B cell (primary cell): ENCODE measurements at regions of chr6 and their contacts with region 1.

Region 1: DNA sequence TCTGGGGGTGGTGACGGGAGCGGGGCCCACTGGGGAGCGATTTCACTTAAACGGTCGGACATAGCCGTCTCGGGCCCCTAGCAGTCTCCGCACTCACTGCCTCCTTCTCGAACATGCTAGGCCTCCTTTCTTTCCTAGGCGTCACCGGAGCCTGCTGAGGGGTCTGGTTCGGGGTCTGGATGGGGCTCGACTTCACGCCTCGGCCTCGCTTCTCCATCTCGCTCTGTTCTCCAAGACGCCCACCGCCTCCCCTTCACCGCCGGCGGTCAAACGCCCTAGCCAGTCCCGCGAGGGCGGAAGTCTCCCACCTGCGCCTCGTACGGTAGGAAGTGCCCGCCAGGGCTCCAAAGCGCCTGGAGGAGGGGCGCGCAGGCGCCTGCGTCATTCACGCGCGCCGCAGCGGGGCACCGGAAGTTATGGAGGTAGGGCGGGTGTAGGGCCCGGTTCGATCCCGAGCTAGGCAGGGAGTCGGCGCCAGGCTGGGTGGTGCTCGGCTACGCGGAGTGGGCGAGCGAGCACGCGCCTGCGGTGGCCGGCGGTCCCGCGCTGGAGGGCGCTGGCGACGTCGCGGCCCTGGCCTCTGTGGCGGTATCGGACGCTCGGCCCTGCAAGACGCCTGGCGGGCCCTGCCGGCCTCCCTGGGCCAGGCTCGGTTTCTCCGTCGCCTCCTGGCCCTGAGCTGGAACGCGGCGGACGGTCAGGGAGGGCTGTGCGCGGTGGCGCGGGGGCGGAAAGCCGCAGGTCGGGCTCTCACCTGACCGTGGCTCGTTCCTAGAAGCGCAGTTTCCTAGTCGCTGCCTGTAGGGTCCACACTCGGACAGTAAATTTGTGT is at the starts of genes DYNLT2 and ERMARD:
- DNase-seq: peak; percentile 97
- ATAC-seq: peak; percentile 89
- H3K4me3 ChIP-seq: peak within 1 kb of the TSS; percentile 72 to 85 (median 79)
- H3K4me3 Mint-ChIP-seq: peak within 1 kb of the TSS; percentile 98
- H3K27ac ChIP-seq: peak within 1 kb of the TSS; percentile 91 to 97
- H3K27ac Mint-ChIP-seq: peak within 1 kb of the TSS; percentile 98
- H3K4me1 ChIP-seq: peaks cover 17 to 20% of the 10 kb centered on the region in 2 donors
- H3K4me1 Mint-ChIP-seq: peaks cover 27% of the 10 kb centered on the region
- H3K27me3 ChIP-seq: no peaks in the 10 kb centered on the region
- H3K27me3 Mint-ChIP-seq: no peaks in the 10 kb centered on the region
- CTCF ChIP-seq: no peak
- total RNA-seq, gene DYNLT2: 6.9 and 7.2 TPM in 2 replicates
- total RNA-seq, gene ERMARD: 41.5 and 42.8 TPM in 2 replicates

Region 2: GRCh38 chr6:169723200-169723909 is 28.1 kb before region 1 on chr6:
- CTCF ChIA-PET with region 1: interaction called, 6 read pairs
- POLR2A ChIA-PET with region 1: no interaction called
- intact Hi-C with region 1: loop called (anchors 1 kb)
- DNase-seq: peak; percentile 85
- ATAC-seq: peak; percentile 39
- H3K4me3 ChIP-seq: peak overlapping the region; percentile 58 to 95 (median 77)
- H3K4me3 Mint-ChIP-seq: peak overlapping the region; percentile 90
- H3K27ac ChIP-seq: peak overlapping the region; percentile 77 to 88
- H3K27ac Mint-ChIP-seq: peak overlapping the region; percentile 89
- H3K4me1 ChIP-seq: peaks cover 17 to 18% of the 10 kb centered on the region in 2 donors
- H3K4me1 Mint-ChIP-seq: peaks cover 33% of the 10 kb centered on the region
- H3K27me3 ChIP-seq: no peaks in the 10 kb centered on the region
- H3K27me3 Mint-ChIP-seq: no peaks in the 10 kb centered on the region
- CTCF ChIP-seq: no peak

Region 3: DNA sequence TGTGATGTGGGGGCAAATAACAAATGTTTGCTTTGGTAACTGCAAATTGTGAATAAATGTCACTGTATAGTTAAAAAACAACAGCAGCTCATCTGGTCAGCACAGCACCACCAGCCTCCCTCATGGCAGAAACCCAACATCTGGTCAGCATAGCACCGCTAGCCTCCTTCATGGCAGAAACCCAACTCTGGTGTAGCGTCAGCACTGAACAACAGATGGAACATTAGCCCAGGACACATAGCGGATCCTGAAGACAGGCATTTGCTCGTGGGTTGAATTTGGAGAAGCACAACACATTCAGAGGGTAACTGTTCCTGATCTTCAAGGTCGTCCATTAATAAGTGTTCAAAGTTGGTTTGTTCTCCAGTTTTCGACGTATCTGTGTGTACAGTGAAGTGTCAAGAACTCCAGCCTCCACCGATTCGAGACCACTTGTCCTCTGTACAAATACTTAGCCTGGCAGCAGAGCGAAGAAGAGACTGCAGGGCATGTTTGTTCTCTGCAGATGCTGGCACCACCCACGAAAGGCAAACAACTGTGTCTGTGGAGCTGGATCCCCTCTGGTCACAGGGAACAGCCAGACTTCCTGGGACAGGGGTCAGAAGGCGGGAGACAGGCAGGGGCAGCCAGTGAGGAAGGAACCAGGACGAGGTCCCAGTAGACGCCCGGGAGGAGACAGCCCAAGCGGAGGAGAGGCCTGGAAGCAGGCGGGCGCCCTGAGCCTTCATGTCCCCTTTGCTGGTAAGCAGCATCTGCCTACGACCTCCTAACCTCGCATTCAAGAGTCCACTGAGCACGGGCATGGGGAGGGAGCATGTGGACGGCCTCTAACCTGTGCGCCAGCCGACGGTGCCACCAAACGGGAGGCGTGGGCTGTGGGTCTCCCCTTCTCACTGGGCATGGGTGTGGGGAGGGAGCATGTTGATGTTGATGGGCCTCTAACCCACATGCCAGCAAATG is 273.8 kb after region 1 on chr6:
- CTCF ChIA-PET with region 1: no interaction called
- POLR2A ChIA-PET with region 1: no interaction called
- intact Hi-C with region 1: no loop called
- DNase-seq: no peak
- ATAC-seq: no peak
- H3K4me3 ChIP-seq: no peak overlapping the region
- H3K4me3 Mint-ChIP-seq: no peak overlapping the region
- H3K27ac ChIP-seq: no peak overlapping the region
- H3K27ac Mint-ChIP-seq: no peak overlapping the region
- H3K4me1 ChIP-seq: no peaks in the 10 kb centered on the region
- H3K4me1 Mint-ChIP-seq: no peaks in the 10 kb centered on the region
- H3K27me3 ChIP-seq: peaks cover 0 to 3% (median 0%) of the 10 kb centered on the region in 4 experiments
- H3K27me3 Mint-ChIP-seq: peaks cover 25% of the 10 kb centered on the region
- CTCF ChIP-seq: no peak

Region 4: GRCh38 chr6:170189236-170189635 is 437.8 kb after region 1 on chr6:
- CTCF ChIA-PET with region 1: no interaction called
- POLR2A ChIA-PET with region 1: no interaction called
- intact Hi-C with region 1: no loop called
- DNase-seq: no peak
- ATAC-seq: no peak
- H3K4me3 ChIP-seq: no peak overlapping the region
- H3K4me3 Mint-ChIP-seq: no peak overlapping the region
- H3K27ac ChIP-seq: no peak overlapping the region
- H3K27ac Mint-ChIP-seq: no peak overlapping the region
- H3K4me1 ChIP-seq: no peaks in the 10 kb centered on the region
- H3K4me1 Mint-ChIP-seq: no peaks in the 10 kb centered on the region
- H3K27me3 ChIP-seq: peaks cover 0 to 11% (median 0%) of the 10 kb centered on the region in 4 experiments
- H3K27me3 Mint-ChIP-seq: peaks cover 3% of the 10 kb centered on the region
- CTCF ChIP-seq: no peak

Region 5: DNA sequence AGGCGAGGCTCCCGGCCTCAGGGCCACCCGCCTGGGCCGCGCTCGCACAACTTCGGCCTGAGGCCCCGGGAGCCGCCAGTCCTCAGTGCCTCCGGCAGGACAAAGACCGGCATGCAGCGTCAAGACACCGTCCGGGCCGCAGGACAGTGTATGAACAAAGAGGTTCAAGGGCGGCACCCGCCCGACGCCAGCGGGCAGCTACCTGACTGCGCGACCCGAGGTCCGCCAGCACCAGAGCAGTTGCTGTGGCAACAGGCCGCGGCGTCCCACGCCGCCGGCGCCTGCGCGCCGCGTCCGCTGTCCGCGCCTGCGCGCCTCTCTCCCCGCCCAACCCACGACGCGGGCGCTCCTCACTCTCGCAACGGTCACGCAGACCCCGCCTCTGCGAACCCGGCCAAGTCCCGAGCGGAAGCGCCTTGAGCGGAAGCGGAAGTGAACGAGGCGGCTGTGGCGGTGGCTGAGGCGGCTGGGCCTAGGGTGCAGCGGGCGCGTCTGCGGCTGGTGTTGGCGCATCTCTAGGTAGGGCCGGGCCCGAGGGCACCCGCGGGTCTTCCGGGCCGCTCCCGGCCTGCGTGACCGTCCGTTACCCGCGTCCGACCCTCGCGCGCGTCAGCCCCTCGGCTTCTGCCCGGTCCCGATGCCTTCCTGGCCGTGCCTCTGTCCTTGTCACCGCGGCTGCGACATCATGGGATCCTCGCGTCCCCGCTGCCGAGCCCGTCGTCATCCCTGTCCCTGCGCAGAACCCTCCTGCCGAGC is 555.0 kb after region 1 on chr6 and contains the start of gene FAM120B:
- CTCF ChIA-PET with region 1: no interaction called
- POLR2A ChIA-PET with region 1: no interaction called
- intact Hi-C with region 1: loop called (anchors 1 kb)
- DNase-seq: peak; percentile 98
- ATAC-seq: peak; percentile 96
- H3K4me3 ChIP-seq: peak within 1 kb of the TSS; percentile 45 to 95 (median 86)
- H3K4me3 Mint-ChIP-seq: peak within 1 kb of the TSS; percentile 98
- H3K27ac ChIP-seq: peak within 1 kb of the TSS; percentile 72 to 90
- H3K27ac Mint-ChIP-seq: peak within 1 kb of the TSS; percentile 97
- H3K4me1 ChIP-seq: peaks cover 22 to 34% of the 10 kb centered on the region in 2 donors
- H3K4me1 Mint-ChIP-seq: peaks cover 49% of the 10 kb centered on the region
- H3K27me3 ChIP-seq: peaks cover 0 to 4% (median 1%) of the 10 kb centered on the region in 4 experiments
- H3K27me3 Mint-ChIP-seq: peaks cover 26% of the 10 kb centered on the region
- CTCF ChIP-seq: no peak
- total RNA-seq, gene FAM120B: 51.7 and 53.2 TPM in 2 replicates

Region 6: GRCh38 chr6:170554013-170554795 is 802.7 kb after region 1 on chr6 and contains the start of gene TBP:
- CTCF ChIA-PET with region 1: no interaction called
- POLR2A ChIA-PET with region 1: interaction called, 12 read pairs
- intact Hi-C with region 1: loop called (anchors 1 kb)
- DNase-seq: peak; percentile 97
- ATAC-seq: peak; percentile 94
- H3K4me3 ChIP-seq: peak within 1 kb of the TSS; percentile 71 to 99 (median 85)
- H3K4me3 Mint-ChIP-seq: no peak within 1 kb of the TSS
- H3K27ac ChIP-seq: peak within 1 kb of the TSS; percentile 91 to 92
- H3K27ac Mint-ChIP-seq: no peak within 1 kb of the TSS
- H3K4me1 ChIP-seq: peaks cover 27 to 28% of the 10 kb centered on the region in 2 donors
- H3K4me1 Mint-ChIP-seq: peaks cover 30% of the 10 kb centered on the region
- H3K27me3 ChIP-seq: no peaks in the 10 kb centered on the region
- H3K27me3 Mint-ChIP-seq: no peaks in the 10 kb centered on the region
- CTCF ChIP-seq: no peak
- total RNA-seq, gene TBP: 24.7 and 29.5 TPM in 2 replicates

Region 7: DNA sequence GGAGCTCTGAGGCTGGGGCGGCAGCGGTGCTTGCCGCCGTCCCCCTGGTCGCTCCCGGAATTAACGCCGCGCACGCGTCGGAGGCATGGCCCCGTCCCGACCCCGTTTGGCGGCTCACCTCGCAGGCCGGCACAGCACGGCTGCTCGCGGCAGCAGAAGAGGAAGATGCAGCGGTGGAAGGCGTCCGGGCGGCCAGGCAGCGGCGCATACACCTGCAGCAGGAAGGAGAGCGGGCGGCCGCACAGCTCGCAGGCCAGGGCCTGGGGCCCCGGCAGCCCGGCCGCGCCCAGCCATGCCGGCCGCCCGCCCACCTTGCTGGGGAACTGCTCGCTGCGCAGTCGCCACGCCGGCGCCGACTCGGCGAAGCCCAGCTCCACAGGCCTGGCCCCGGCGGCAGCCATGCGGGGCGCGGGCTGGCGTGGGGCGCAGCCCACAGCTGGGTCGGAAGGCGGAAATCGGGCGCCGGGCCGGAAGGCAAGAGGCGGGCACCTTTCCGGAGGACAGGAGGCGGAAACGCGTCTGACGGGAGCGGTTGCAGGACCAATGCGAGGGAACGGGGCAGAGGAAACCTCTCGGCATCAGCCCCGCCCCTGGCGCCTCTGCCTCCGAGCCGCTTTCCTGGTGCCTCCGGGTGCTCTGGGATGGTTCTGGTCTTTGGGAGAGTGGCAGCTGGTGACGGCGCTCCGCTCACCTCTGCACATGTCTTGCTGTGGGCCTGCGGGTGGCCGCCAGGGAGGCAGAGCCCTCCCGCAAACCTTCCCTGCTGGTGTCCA is 832.9 kb after region 1 on chr6 and contains the start of gene PDCD2:
- CTCF ChIA-PET with region 1: no interaction called
- POLR2A ChIA-PET with region 1: no interaction called
- intact Hi-C with region 1: loop called (anchors 1 kb)
- DNase-seq: peak; percentile 93
- ATAC-seq: peak; percentile 93
- H3K4me3 ChIP-seq: peak within 1 kb of the TSS; percentile 76 to 85 (median 82)
- H3K4me3 Mint-ChIP-seq: peak within 1 kb of the TSS; percentile 98
- H3K27ac ChIP-seq: peak within 1 kb of the TSS; percentile 82 to 86
- H3K27ac Mint-ChIP-seq: peak within 1 kb of the TSS; percentile 96
- H3K4me1 ChIP-seq: peaks cover 14 to 16% of the 10 kb centered on the region in 2 donors
- H3K4me1 Mint-ChIP-seq: peaks cover 25% of the 10 kb centered on the region
- H3K27me3 ChIP-seq: peaks cover 0 to 7% (median 0%) of the 10 kb centered on the region in 4 experiments
- H3K27me3 Mint-ChIP-seq: no peaks in the 10 kb centered on the region
- CTCF ChIP-seq: no peak
- total RNA-seq, gene PDCD2: 64.5 and 71.0 TPM in 2 replicates